GM10248 (cell line): ENCODE measurements at regions of chr6 and their contacts with region 1.

Region 1: DNA sequence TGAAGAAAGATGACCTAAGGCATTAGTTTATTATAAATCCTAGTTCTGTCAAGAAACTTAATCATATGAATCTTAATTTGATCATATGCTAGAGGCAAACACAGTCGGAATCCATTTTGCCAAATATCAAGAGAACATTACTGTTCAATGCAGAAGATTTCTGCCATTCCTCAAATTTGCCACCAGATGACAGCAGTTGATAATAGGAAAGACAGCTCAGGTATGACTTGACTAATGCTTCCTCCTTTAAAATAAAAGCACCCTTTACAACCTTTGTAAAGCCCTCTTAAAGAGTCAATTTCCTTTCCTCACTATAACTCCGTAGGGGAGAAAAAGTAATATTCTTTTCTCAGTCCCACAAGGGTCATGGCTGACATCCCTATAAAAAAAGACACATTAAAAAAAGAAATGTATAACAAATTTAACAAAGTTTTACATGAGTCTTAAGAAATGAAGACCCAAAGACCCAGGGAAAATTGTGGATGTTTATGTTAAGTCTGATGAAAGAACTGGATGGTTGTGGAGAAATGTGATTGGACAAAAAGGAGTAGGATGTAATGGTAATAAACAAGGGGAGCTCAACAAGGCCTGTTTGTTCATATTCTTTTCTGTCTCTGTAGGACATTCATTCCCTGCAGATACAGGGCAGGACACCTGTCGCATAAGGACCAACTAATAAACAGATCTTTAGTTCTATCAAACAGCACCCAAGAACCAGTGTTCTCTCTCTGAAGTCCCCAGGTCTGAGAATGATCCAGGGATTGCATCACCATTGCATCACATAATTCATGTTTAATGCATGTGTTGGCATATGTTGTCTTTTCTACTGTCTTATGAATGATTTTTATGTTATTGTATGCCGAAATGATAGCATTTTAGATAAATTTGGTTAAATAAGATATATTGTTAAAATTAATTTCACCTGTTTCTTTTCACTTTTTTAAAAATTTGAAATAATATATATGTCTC is 23.0 kb upstream of the IL17A start:
- DNase-seq: peak; percentile 30
- CTCF ChIP-seq: peak; percentile 74

Region 2: GRCh38 chr6:52176550-52176949 is 13.3 kb after region 1 on chr6:
- CTCF ChIA-PET with region 1: interaction called, 38 read pairs
- POLR2A ChIA-PET with region 1: no interaction called
- DNase-seq: no peak
- CTCF ChIP-seq: no peak

Region 3: DNA sequence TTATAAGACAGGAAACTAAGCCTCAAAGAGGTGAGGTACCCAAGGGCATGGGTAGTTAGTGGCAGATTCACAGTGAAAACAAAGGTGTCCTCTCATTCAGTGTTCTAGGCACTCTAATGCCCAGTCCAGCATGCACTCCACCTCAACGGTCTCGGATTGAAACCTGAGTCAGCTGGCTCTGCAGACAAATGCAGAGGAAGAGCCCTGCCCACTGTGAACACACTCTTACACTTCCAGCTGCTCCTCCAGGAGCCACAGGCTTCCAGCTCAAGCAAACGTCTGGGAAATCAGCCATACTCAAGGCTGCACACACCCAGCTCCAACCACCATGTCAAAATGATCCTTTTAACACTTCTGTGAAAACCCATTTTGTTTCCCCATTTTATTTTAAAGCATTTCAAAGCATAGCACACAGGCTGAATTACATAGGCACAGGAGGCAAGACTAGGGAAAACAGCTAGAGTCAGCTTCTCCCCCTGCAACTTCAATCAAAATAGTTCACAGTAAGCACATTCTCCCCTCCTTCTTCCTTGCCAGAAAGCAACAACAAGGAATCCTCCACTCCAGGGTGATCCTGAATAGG is 20.0 kb after region 1 on chr6:
- CTCF ChIA-PET with region 1: interaction called, 11 read pairs
- POLR2A ChIA-PET with region 1: no interaction called
- DNase-seq: no peak
- CTCF ChIP-seq: no peak

Region 4: GRCh38 chr6:52233975-52234823 is 71.0 kb after region 1 on chr6:
- CTCF ChIA-PET with region 1: interaction called, 99 read pairs
- POLR2A ChIA-PET with region 1: no interaction called
- DNase-seq: peak; percentile 52
- CTCF ChIP-seq: peak; percentile 66

Region 5: DNA sequence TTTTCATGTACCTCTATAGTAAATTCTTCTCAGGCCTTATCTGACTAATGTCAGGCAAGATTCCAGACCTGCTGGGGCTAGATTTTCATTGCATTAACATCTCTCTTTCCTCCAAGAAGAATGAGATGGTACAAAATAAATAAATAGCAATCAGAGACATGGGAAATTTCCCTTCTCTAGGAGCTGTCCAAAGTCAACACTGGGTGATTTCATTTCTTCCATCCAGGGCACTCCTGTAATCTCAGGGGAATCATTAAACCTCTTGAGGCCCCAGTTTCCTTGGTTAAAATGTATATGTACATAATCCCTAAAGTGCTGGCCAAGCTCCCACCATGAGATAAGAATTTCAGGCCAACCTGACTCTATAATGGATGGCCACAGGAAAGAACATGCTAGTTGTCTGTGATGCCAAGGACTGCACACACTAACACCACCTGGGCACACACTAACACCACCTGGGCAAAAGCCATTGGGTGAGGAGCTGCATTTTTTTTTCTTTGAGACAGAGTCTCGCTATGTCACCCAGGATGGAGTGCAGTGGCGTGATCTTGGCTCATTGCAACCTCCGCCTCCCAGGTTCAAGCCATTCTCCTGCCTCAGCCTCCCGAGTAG is 80.2 kb after region 1 on chr6:
- CTCF ChIA-PET with region 1: interaction called, 16 read pairs
- POLR2A ChIA-PET with region 1: no interaction called
- DNase-seq: no peak
- CTCF ChIP-seq: no peak

Region 6: GRCh38 chr6:52399511-52400312 is 236.5 kb after region 1 on chr6:
- CTCF ChIA-PET with region 1: interaction called, 11 read pairs
- POLR2A ChIA-PET with region 1: no interaction called
- DNase-seq: peak; percentile 33
- CTCF ChIP-seq: peak; percentile 77